ENCODE measurements at regions of chr1 and their contacts with region 1.

Region 1: GRCh38 chr1:41516168-41517061 is 31.9 kb upstream of the EDN2 start:
- DNase-seq: no peak
- H3K4me3 ChIP-seq: peak overlapping the region; percentile 31
- H3K27me3 ChIP-seq: no peaks in the 10 kb centered on the region
- CTCF ChIP-seq: peak; percentile 85

Region 2: DNA sequence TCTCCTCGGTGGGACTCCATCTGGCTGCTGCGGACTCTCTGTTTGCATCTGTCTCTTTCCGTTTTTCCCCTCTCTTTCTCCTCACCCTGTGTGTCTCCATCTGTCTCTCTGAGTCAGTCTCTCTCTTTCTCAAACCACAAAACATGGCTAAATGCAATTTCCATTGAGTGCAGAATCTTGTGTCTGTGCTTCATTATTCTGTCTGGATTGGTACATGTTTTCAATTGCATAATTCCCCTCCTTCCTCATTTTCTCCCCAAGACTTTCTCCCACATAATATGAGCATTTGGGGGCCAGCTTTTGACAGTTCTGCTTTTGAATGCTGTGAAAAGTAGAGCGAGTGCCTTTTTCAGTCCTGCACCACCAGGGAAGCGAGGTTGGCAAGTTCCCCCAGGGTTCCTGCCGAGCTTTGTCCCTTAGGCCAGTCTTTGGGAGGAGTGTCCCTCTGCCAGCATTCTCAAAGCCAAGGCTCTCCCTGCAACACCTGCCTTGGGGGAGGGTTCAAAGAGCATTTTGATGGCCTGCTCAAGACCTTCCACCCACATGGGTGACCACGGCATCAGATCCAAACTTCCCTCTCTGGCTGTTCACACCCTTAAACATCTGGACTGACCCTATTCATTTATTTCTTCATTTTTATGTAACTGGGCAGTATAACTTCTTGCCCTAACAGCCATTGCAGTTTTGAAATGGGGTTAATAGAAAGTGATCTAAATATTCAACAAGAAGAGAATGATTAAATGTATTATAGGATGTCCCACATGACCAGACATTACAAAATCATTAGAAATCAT is 241.5 kb before region 1 on chr1:
- CTCF ChIA-PET with region 1: no interaction called
- POLR2A ChIA-PET with region 1: no interaction called
- DNase-seq: no peak
- H3K4me3 ChIP-seq: no peak overlapping the region
- H3K27me3 ChIP-seq: peaks cover 8% of the 10 kb centered on the region
- CTCF ChIP-seq: no peak

Region 3: GRCh38 chr1:41330588-41331545 is 185.5 kb before region 1 on chr1:
- CTCF ChIA-PET with region 1: no interaction called
- POLR2A ChIA-PET with region 1: no interaction called
- DNase-seq: no peak
- H3K4me3 ChIP-seq: no peak overlapping the region
- H3K27me3 ChIP-seq: peaks cover 3% of the 10 kb centered on the region
- CTCF ChIP-seq: no peak

Region 4: GRCh38 chr1:41387667-41388091 is 128.7 kb before region 1 on chr1:
- CTCF ChIA-PET with region 1: no interaction called
- POLR2A ChIA-PET with region 1: no interaction called
- DNase-seq: peak; percentile 18
- H3K4me3 ChIP-seq: no peak overlapping the region
- H3K27me3 ChIP-seq: peaks cover 44% of the 10 kb centered on the region
- CTCF ChIP-seq: no peak

Region 5: GRCh38 chr1:41498809-41499208 is 17.6 kb before region 1 on chr1:
- CTCF ChIA-PET with region 1: interaction called, 13 read pairs
- POLR2A ChIA-PET with region 1: no interaction called
- DNase-seq: no peak
- H3K4me3 ChIP-seq: no peak overlapping the region
- H3K27me3 ChIP-seq: no peaks in the 10 kb centered on the region
- CTCF ChIP-seq: no peak

Region 6: GRCh38 chr1:41504114-41505035 is 12.0 kb before region 1 on chr1:
- CTCF ChIA-PET with region 1: interaction called, 20 read pairs
- POLR2A ChIA-PET with region 1: no interaction called
- DNase-seq: no peak
- H3K4me3 ChIP-seq: no peak overlapping the region
- H3K27me3 ChIP-seq: no peaks in the 10 kb centered on the region
- CTCF ChIP-seq: no peak; the same call in 1 of the 2 replicates

Region 7: GRCh38 chr1:41537788-41538351 is 21.5 kb after region 1 on chr1:
- CTCF ChIA-PET with region 1: interaction called, 23 read pairs
- POLR2A ChIA-PET with region 1: no interaction called
- DNase-seq: peak; percentile 84
- H3K4me3 ChIP-seq: no peak overlapping the region
- H3K27me3 ChIP-seq: no peaks in the 10 kb centered on the region; the same call in 1 of the 2 replicates
- CTCF ChIP-seq: no peak

Region 8: DNA sequence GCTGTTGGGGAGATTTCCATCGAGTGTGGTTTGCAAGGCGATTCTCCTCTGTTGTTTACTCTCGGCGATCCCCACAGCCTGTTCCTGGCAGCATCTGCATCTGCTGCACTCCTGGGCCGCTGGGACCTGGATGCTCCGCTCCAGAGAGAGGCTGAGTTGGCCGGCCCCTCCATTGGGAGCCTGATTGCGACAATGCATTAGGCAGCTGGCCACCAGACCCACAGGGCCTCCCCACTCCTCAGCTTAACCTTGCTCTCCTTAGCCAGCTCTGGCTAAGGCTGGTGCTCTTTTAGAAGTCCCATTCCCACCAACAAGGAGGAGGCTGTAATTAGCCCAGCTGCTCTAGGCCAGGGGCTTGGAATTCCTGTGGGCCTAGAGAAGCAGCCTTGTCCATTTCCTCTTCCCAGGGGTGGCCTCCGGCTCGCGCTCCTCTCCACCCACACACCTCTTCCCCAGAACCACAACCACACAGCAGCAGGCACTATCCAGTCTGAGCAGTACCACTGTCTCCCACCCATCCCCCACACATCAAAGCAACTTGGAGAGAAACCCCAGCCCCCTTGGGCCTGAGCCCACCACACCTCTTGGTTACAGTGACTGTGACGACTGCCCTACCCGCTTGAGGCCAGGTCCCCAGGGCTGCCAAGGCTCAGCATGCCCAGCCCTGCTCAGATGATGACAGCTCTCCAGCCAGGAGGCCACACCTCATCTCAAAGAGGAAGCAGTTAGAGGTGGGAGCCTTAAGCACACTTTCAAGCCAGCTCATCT is 161.9 kb after region 1 on chr1:
- CTCF ChIA-PET with region 1: no interaction called
- POLR2A ChIA-PET with region 1: no interaction called
- DNase-seq: peak; percentile 42
- H3K4me3 ChIP-seq: no peak overlapping the region
- H3K27me3 ChIP-seq: no peaks in the 10 kb centered on the region
- CTCF ChIP-seq: no peak